GM23248 (cell line): ENCODE measurements at regions of chr4 and their contacts with region 1.

Region 1: DNA sequence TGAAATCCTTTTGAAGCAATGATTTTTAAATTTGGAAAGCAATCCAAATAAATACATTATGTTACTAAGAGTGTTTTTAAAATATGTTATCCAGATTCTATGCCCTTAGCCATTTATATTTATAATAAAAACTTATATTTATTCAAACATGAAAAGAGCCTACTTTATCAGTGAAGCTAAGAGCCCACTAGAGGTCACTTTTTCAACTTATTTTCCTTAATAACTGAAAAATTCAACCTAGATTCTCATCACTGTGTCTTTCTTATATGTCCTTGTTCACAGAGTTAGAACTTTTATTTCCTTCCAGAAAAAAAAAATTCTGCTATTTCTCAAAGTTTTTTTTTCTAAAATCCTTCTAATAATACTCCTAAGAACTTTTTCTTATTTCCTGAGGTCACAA is 23.9 kb downstream of the PRDM8 start:
- DNase-seq: peak; percentile 78
- H3K4me3 ChIP-seq: no peak overlapping the region
- H3K27ac ChIP-seq: no peak overlapping the region
- H3K4me1 ChIP-seq: peaks cover 13% of the 10 kb centered on the region
- H3K27me3 ChIP-seq: no peaks in the 10 kb centered on the region

Region 2: GRCh38 chr4:80309294-80310004 is 88.3 kb after region 1 on chr4:
- in situ Hi-C with region 1: loop called (anchors 10 kb)
- DNase-seq: peak; percentile 97
- H3K4me3 ChIP-seq: peak overlapping the region; percentile 45
- H3K27ac ChIP-seq: peak overlapping the region; percentile 83
- H3K4me1 ChIP-seq: peaks cover 66% of the 10 kb centered on the region
- H3K27me3 ChIP-seq: no peaks in the 10 kb centered on the region